Heart left ventricle (tissue), 16 donors: ENCODE measurements at regions of chr10 and their contacts with region 1.

Region 1: DNA sequence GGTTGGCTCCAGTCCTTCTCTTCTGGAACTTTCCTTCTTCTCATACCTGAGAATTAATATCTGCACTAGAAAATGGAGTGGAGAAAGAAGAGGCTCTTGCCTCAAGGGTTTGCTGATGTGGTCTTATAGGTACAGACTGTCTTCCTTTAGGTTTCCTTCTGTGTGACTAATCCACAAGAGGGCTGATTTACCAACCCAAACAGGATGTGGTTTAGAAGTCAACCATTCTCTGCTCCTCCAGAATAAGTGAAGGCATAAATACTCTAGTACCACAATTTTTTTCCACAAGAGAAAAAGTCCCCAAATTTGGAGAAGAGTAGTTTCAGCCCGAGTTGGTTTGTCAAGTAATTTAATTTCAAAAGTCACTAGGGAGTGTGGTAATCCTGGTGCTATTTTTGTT is 85.8 kb downstream of the NRP1 start:
- DNase-seq: no peak
- ATAC-seq: peak in 1 of 4 donors; percentile 36
- H3K4me3 ChIP-seq: no peak overlapping the region
- H3K27ac ChIP-seq: peak overlapping the region; percentile 56 to 87 (median 73)
- H3K4me1 ChIP-seq: peaks cover 2 to 90% (median 55%) of the 10 kb centered on the region in 12 donors
- H3K27me3 ChIP-seq: no peaks in the 10 kb centered on the region
- CTCF ChIP-seq: no peak
- POLR2A ChIP-seq: no peak

Region 2: GRCh38 chr10:32893431-32893830 is 355.2 kb before region 1 on chr10:
- intact Hi-C with region 1: no loop called
- DNase-seq: no peak
- ATAC-seq: peak in 1 of 4 donors; percentile 16
- H3K4me3 ChIP-seq: no peak overlapping the region
- H3K27ac ChIP-seq: no peak overlapping the region
- H3K4me1 ChIP-seq: no peaks in the 10 kb centered on the region
- H3K27me3 ChIP-seq: no peaks in the 10 kb centered on the region
- CTCF ChIP-seq: no peak
- POLR2A ChIP-seq: no peak

Region 3: DNA sequence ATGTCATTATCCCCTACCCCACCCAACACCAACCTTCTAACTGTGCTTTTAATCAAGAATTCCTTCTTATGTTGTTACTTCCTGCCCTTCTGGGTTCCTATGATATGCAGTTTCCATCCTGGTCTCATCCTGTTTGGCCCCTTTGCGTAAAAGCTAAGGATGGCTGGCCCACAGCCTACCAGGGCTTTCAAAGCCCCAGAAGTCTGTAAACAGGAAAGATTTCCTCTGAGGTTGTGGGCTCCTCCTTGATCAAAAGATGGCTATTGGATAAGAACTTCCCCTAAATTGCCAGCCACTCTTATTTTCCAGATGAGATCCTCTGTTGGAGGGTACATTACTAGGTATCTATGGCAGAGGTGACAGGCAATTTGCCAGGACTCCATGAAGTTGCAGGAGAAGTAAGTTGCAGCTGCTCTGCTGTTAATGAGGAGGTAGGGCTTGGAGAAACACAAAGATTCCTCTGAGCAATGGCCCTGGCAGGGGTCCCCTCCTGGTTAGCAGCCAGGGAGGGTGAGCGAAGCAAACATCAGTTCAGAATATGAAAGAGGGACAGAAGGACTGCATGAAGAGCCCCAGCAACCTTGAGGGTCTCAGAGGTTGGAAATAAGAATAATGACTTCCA is 53.7 kb after region 1 on chr10:
- intact Hi-C with region 1: loop called in 1 of 10 experiments (anchors 5 kb)
- DNase-seq: peak in 2 of 5 donors; percentile 46 to 57
- ATAC-seq: peak in 3 of 4 donors; percentile 35 to 80 (median 55)
- H3K4me3 ChIP-seq: no peak overlapping the region
- H3K27ac ChIP-seq: peak overlapping the region in 11 of 12 donors; percentile 23 to 82 (median 66)
- H3K4me1 ChIP-seq: peaks cover 24 to 100% (median 93%) of the 10 kb centered on the region in 12 donors
- H3K27me3 ChIP-seq: no peaks in the 10 kb centered on the region
- CTCF ChIP-seq: no peak
- POLR2A ChIP-seq: no peak

Region 4: GRCh38 chr10:33355274-33355673 is 106.6 kb after region 1 on chr10:
- intact Hi-C with region 1: no loop called
- DNase-seq: peak in 2 of 5 donors; percentile 35 to 41
- ATAC-seq: peak; percentile 64 to 92 (median 88)
- H3K4me3 ChIP-seq: no peak overlapping the region
- H3K27ac ChIP-seq: peak overlapping the region in 3 of 12 donors; percentile 16 to 76 (median 35)
- H3K4me1 ChIP-seq: peaks cover 0 to 12% (median 0%) of the 10 kb centered on the region in 12 donors
- H3K27me3 ChIP-seq: no peaks in the 10 kb centered on the region
- CTCF ChIP-seq: no peak
- POLR2A ChIP-seq: no peak

Region 5: GRCh38 chr10:33746836-33747268 is 498.2 kb after region 1 on chr10:
- intact Hi-C with region 1: no loop called
- DNase-seq: no peak
- ATAC-seq: no peak
- H3K4me3 ChIP-seq: no peak overlapping the region
- H3K27ac ChIP-seq: no peak overlapping the region
- H3K4me1 ChIP-seq: peaks cover 0 to 23% (median 16%) of the 10 kb centered on the region in 12 donors
- H3K27me3 ChIP-seq: no peaks in the 10 kb centered on the region
- CTCF ChIP-seq: no peak
- POLR2A ChIP-seq: no peak

Region 6: GRCh38 chr10:33832124-33832787 is 583.6 kb after region 1 on chr10:
- intact Hi-C with region 1: no loop called
- DNase-seq: no peak
- ATAC-seq: no peak
- H3K4me3 ChIP-seq: no peak overlapping the region
- H3K27ac ChIP-seq: no peak overlapping the region
- H3K4me1 ChIP-seq: no peaks in the 10 kb centered on the region
- H3K27me3 ChIP-seq: no peaks in the 10 kb centered on the region
- CTCF ChIP-seq: no peak
- POLR2A ChIP-seq: no peak